Sciatic nerve (tissue), 2 donors: ENCODE measurements at regions of chr1 and their contacts with region 1.

Region 1: GRCh38 chr1:204398217-204399081 is 13.2 kb downstream of the PPP1R15B start:
- DNase-seq: no peak
- ATAC-seq: peak; percentile 82

Region 2: DNA sequence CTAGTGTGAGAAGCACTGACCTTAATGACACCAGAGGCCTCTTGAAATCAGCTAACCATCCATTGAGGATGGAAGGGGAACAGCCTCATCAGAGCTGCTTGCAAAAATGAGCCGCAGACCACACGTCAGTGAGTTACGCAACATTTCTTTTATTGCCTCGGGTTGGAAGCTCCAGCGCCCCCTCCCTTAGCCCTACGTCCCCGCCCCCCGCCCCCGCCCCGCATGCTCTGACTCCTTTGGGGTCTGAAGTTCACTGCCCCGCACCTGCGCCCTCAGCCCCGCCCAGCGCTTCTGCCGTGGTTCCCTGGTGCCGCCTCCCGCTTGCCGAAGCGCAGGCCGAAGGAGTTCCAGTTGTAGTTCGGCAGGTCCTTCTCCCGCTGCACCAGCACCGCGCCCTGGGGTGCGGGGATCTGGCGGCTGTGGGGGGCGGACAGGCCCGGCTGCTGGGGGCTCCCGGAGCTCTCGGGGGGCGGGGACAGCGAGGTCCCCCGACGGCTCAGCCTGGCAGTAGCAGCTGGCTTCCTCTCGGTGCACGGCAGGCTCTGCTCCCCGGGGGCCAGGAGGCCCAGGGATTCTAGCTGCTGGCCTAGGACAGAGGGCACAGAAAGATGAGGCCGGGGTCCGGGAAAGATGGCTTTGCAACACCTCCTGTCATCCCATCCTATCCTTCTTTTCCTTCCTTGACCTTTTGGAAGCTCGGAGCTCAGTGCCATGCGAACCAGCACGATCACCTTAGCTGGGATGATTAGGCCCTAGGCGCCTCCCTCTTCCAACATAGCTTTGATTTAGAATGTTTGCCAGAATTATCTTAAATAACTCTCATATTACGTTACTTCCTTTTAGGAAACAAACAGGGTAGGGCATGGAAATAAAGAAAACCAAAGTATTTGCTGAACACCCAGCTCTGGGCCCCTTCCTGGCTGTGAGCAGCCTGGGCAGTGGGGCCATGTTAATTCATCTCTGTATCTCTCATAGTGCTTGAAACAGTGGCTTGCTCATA is 207.9 kb before region 1 on chr1:
- intact Hi-C with region 1: no loop called
- DNase-seq: peak; percentile 65
- ATAC-seq: peak; percentile 89

Region 3: DNA sequence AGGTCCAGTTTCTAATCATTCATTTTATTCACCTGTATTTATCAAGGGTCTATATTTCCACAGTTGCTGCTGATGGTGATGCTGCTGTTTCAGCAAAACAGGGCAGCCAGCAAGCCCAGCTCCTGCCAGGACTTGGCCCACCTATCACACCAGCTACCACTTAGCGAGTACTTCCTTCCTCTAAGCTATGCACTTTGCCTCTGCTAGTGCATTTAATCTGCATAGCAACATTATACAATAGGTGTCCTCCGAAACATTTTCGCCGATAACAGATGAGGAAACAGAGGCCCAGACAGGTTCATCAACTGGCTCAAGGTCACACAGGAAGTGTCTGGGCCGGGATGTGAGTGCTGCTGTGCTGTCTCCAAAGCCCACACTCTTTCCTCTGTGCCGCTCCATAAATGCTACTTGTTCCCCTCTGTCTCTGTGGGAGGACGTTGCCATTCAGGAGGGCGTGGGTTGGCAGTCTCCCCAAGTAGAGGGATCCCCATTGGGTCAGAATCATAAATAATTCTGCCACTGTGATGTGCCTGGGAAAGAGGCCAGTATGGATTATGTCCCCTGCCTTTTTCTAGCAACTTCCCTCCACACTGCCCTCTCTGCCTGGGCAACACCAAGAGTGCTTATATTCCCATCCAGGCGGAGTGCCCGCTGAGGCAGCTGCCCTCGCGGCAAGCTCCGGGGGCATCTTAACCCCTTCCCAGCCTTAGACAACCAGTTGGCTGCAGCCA is 29.3 kb before region 1 on chr1:
- intact Hi-C with region 1: loop called (anchors 1 kb)
- DNase-seq: no peak
- ATAC-seq: peak; percentile 31